ENCODE measurements at regions of chr15 and their contacts with region 1.

Region 1: GRCh38 chr15:98311566-98312188 is 336.7 kb upstream of the IGF1R start:
- ATAC-seq: peak in 3 of 8 experiments; percentile 56 to 70 (median 57)
- H3K4me3 ChIP-seq: no peak overlapping the region
- H3K27ac ChIP-seq: no peak overlapping the region
- H3K4me1 ChIP-seq: no peaks in the 10 kb centered on the region

Region 2: GRCh38 chr15:98413933-98414546 is 102.4 kb after region 1 on chr15:
- in situ Hi-C with region 1: loop called in 5 of 9 experiments (anchors 10 to 25 kb)
- ATAC-seq: no peak
- H3K4me3 ChIP-seq: no peak overlapping the region
- H3K27ac ChIP-seq: no peak overlapping the region
- H3K4me1 ChIP-seq: peaks cover under 1 to 8% of the 10 kb centered on the region in 2 donors

Region 3: DNA sequence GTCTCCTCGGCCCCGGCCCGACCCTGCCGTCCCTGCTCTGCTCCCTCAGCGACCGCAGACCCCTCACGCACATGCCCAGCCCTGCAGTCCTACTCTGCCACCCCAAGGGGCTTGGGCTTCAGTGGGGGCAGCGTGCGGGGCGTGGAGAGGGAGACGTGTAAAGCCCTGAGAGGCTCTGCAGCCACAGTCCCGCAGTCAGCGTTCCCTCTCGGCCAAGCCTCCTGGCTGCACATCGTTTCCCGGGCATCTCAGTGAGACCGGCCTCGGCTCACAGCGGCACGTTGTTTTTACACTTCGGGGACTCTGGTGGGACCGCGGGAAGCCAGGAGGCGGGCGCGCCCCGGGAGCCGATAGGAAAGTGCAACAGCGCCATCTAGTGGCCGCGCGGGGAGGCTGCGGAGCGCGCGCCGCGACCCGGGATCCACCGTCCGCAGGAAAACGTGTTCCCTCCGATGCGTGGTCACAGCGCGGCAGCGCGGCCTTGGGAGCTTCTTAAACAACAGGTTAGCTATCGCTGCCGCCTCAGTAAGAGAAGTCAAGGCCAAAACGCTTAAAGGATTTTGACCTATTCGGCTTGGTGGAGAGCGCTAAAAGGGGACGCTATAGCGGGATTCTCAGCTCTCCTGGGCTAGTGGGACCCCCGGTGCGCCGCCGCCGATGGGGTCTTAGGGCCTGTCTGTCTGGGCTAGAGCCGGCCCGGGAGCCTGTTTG is 109.9 kb after region 1 on chr15:
- in situ Hi-C with region 1: loop called in 6 of 9 experiments (anchors 10 to 25 kb)
- ATAC-seq: peak; percentile 88 to 97 (median 96)
- H3K4me3 ChIP-seq: peak overlapping the region; percentile 17 to 32 (median 25)
- H3K27ac ChIP-seq: no peak overlapping the region
- H3K4me1 ChIP-seq: peaks cover 6 to 8% of the 10 kb centered on the region in 2 donors

Region 4: DNA sequence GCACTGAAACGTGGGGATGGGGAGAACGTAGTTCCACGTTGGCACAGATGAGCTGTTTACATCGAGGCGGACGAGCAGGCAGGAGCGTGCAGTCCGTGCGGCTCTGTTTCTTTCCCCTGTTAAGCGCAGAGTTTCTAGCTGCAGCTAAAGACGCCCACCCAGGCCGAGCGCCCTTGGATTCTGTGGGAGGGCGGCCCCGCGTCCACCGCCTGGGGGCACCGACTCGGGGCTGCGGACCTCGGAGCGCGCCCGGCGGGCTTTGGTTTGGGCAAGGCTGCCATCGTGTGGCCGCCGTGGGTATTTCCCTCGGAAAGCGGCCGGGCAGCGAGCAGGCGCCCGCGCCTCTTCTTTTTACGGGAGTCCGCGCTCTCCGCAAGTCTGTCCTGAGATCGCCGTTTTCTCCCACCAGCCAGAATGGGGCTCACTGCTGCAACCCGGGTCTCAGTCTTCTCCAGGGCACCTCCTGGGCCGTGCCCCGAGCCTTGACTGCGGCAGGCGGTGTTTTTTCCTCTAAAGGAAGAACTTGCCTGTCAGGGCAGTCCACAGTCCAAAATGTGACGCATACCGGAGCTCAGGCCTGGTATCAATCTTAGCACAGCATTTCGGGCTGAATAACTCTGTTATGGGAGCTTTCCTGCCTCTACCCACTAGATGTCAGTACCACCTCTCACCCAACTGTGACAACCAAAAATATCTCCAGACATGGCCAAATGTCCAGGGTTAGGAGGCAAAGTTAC is 116.7 kb after region 1 on chr15:
- in situ Hi-C with region 1: loop called in 5 of 9 experiments (anchors 10 to 25 kb)
- ATAC-seq: peak; percentile 93 to 97 (median 95)
- H3K4me3 ChIP-seq: peak overlapping the region; percentile 11 to 30 (median 28)
- H3K27ac ChIP-seq: no peak overlapping the region
- H3K4me1 ChIP-seq: no peaks in the 10 kb centered on the region

Measured in motor neuron (in vitro differentiated cells).